ENCODE measurements at regions of chr6 and their contacts with region 1.

Region 1: GRCh38 chr6:49606696-49607390 is 29.8 kb downstream of the RHAG start:
- DNase-seq: no peak
- H3K4me3 ChIP-seq: no peak overlapping the region
- H3K27ac ChIP-seq: no peak overlapping the region
- H3K4me1 ChIP-seq: peaks cover 0 to 2% (median 0%) of the 10 kb centered on the region in 4 experiments; a peak in 3 of 7 replicates
- H3K27me3 ChIP-seq: no peaks in the 10 kb centered on the region
- CTCF ChIP-seq: peak in 2 of 3 experiments; percentile 77; a peak in 3 of 4 replicates
- EP300 ChIP-seq: no peak
- POLR2A ChIP-seq: no peak
- RAD21 ChIP-seq: peak; percentile 83 to 84

Region 2: DNA sequence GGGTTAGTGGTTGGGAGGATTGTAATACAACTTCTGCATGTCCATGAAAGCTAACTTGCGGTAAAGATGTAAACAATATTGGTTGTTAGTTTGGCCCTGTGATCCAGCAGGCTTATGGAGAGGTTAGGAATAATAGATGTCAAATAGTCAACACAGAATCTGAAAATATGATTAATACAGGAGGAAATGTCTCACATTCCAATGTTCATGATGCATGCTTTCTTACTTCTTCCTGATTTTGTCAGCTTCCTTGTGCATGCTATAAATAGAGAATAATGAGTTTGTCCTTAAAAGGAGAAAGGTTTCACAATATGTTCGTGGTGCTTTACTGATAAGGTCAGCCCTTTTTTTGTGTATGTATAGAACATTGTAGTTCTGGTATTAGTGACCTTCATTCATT is 280.5 kb before region 1 on chr6:
- CTCF ChIA-PET with region 1: no interaction called
- POLR2A ChIA-PET with region 1: no interaction called
- DNase-seq: no peak
- H3K4me3 ChIP-seq: no peak overlapping the region
- H3K27ac ChIP-seq: no peak overlapping the region
- H3K4me1 ChIP-seq: no peaks in the 10 kb centered on the region
- H3K27me3 ChIP-seq: no peaks in the 10 kb centered on the region
- CTCF ChIP-seq: no peak
- EP300 ChIP-seq: no peak
- POLR2A ChIP-seq: no peak
- RAD21 ChIP-seq: no peak

Region 3: GRCh38 chr6:49541210-49541724 is 65.6 kb before region 1 on chr6:
- CTCF ChIA-PET with region 1: interaction called, 16 read pairs
- POLR2A ChIA-PET with region 1: no interaction called
- DNase-seq: no peak
- H3K4me3 ChIP-seq: no peak overlapping the region
- H3K27ac ChIP-seq: no peak overlapping the region
- H3K4me1 ChIP-seq: no peaks in the 10 kb centered on the region
- H3K27me3 ChIP-seq: no peaks in the 10 kb centered on the region
- CTCF ChIP-seq: no peak
- EP300 ChIP-seq: no peak
- POLR2A ChIP-seq: no peak
- RAD21 ChIP-seq: no peak

Region 4: DNA sequence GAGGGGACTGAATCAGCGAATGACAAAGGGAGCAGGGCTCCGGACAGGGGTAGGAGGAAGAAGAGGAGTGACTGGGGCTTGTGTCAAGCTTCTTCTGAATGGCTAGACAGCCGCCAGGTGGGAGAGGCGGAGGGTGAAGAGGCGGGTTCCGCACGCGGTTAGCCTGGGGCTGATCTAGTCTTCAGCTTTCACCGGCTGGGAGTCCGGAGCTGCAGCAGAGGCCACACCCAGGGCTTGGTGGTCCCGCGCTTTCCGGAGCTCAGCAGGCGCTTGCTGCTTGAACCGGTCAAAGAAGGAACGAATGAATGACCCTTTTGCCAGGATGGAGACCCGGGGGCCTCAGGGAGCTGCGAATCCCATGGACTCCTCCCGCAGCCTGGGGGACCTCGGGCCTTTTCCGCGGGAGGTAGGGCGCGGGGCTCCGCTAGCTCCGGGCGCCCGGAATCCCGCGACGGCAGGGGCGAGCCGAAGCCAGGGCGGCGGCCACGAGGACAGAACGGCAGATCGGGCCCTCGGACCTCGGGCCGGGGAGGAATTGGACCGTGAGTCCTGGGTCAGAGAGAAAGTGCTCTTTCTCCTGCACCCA is 56.3 kb before region 1 on chr6 and contains the start of gene C6orf141:
- CTCF ChIA-PET with region 1: interaction called, 35 read pairs
- POLR2A ChIA-PET with region 1: no interaction called
- DNase-seq: peak; percentile 74 to 81
- H3K4me3 ChIP-seq: peak within 1 kb of the TSS; percentile 69 to 97 (median 79)
- H3K27ac ChIP-seq: peak within 1 kb of the TSS; percentile 76
- H3K4me1 ChIP-seq: peaks cover 4 to 25% (median 9%) of the 10 kb centered on the region in 4 experiments
- H3K27me3 ChIP-seq: peaks cover 0 to 4% (median 0%) of the 10 kb centered on the region in 4 experiments; a peak in 3 of 7 replicates
- CTCF ChIP-seq: no peak
- EP300 ChIP-seq: no peak
- POLR2A ChIP-seq: peak in 1 of 2 experiments; percentile 68; a peak in 2 of 3 replicates
- RAD21 ChIP-seq: no peak
- total RNA-seq, gene C6orf141: 16.1 and 17.6 TPM in 2 replicates

Region 5: GRCh38 chr6:49618257-49618656 is 11.4 kb after region 1 on chr6:
- CTCF ChIA-PET with region 1: interaction called, 13 read pairs
- POLR2A ChIA-PET with region 1: no interaction called
- DNase-seq: no peak
- H3K4me3 ChIP-seq: no peak overlapping the region
- H3K27ac ChIP-seq: no peak overlapping the region
- H3K4me1 ChIP-seq: no peaks in the 10 kb centered on the region
- H3K27me3 ChIP-seq: no peaks in the 10 kb centered on the region
- CTCF ChIP-seq: no peak
- EP300 ChIP-seq: no peak
- POLR2A ChIP-seq: no peak
- RAD21 ChIP-seq: no peak

Region 6: DNA sequence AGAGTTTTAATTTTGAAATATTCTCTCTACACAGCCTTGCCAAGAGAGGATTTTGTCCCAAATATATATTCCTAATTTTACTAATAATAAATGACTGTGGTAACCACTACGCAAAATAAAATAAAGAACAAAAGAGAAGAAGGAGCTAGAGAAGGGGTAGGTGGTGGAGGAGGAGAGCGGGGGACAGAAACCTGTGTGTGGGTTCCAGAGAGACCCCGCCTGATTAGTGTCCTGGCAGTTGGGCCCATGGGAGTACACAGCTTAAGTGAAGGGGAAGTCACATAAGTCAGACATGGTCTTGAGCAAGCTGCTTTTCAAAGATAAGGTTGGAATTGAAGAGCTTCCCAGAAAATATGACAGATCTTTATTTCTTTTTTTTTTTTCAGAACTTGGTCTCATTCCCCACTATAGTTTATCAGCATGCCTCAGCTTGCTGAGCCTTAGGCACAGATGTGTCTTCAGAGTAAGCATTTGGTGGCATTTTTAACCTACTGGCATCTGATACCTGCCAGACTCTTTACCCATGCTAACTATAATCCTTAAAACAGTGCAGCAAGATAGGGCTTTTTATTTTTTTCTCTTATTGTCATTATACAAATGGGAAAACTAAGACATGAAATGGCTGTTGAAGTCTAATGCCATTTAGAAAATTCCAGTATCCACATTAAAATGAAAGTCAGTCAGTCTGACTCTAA is 39.4 kb after region 1 on chr6:
- CTCF ChIA-PET with region 1: no interaction called
- POLR2A ChIA-PET with region 1: no interaction called
- DNase-seq: no peak
- H3K4me3 ChIP-seq: no peak overlapping the region
- H3K27ac ChIP-seq: no peak overlapping the region
- H3K4me1 ChIP-seq: no peaks in the 10 kb centered on the region
- H3K27me3 ChIP-seq: no peaks in the 10 kb centered on the region
- CTCF ChIP-seq: no peak
- EP300 ChIP-seq: no peak
- POLR2A ChIP-seq: no peak
- RAD21 ChIP-seq: no peak

Measured in H1 (cell line).